OCI-LY7 (cell line): ENCODE measurements at regions of chr17 and their contacts with region 1.

Region 1: DNA sequence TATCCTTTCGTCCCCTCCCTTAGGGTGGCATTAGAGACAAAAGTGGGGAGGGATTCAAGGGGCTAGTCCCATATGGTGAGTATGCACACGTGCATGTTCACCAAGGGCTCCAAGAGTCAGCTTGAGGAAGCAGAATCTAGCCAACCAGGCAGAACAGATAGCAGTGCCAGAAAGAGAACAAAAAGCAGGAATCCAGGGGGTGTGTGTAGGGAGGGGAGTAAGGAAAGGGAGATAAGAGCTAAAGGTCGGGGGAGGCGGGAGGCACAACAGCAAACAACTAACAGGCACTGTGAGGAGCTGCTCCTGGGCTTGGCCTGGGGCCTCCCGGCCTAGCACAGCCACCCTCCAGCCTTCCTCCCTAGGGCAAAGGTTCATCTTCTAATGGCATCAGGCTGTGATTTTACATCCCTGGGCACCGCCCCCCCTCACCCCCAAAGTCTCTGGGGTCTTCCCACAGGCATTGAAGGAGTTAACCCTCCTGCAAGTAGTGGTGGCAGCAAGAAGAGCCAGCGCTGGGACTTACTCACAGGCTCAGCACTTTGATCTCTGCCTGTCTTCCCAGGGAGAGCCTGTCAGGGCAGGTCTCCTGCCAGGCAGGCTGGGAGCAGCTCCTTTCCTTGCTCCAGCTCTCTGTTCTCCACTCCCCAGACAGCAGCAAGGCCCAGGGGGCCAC is 12.4 kb upstream of the SUPT4H1 start:
- DNase-seq: no peak
- H3K4me3 ChIP-seq: no peak overlapping the region
- H3K27ac ChIP-seq: no peak overlapping the region
- H3K4me1 ChIP-seq: peaks cover 41% of the 10 kb centered on the region
- CTCF ChIP-seq: no peak

Region 2: DNA sequence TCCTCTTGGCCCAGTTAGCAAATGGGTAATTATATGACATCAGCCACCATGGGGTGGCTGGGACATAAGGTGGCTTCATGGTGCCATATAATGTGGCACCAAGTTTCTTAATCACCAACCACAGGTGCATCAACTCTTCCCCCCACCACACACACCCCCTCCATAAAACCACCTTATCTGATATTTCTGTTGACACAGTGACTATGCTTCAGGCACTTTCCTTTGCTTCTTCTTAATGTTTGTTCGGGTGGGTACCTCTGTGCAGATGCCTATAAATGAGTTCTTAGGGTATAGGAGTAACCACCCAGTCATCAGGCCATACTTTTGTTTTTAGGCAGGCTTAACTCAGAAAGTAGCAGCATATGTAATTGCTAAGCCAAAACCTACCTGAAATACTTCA is 23.4 kb after region 1 on chr17:
- CTCF ChIA-PET with region 1: interaction called, 6 read pairs
- POLR2A ChIA-PET with region 1: interaction called, 10 read pairs
- intact Hi-C with region 1: no loop called
- DNase-seq: no peak
- H3K4me3 ChIP-seq: no peak overlapping the region
- H3K27ac ChIP-seq: no peak overlapping the region
- H3K4me1 ChIP-seq: peaks cover 9% of the 10 kb centered on the region
- CTCF ChIP-seq: no peak